ENCODE measurements at regions of chr12 and their contacts with region 1.

Region 1: GRCh38 chr12:27142101-27142721 is 59.8 kb upstream of the C12orf71 start:
- DNase-seq: peak; percentile 65
- ATAC-seq: peak; percentile 93

Region 2: GRCh38 chr12:27024291-27024690 is 117.9 kb before region 1 on chr12:
- intact Hi-C with region 1: loop called in 1 of 2 experiments (anchors 10 kb)
- DNase-seq: no peak
- ATAC-seq: no peak

Region 3: DNA sequence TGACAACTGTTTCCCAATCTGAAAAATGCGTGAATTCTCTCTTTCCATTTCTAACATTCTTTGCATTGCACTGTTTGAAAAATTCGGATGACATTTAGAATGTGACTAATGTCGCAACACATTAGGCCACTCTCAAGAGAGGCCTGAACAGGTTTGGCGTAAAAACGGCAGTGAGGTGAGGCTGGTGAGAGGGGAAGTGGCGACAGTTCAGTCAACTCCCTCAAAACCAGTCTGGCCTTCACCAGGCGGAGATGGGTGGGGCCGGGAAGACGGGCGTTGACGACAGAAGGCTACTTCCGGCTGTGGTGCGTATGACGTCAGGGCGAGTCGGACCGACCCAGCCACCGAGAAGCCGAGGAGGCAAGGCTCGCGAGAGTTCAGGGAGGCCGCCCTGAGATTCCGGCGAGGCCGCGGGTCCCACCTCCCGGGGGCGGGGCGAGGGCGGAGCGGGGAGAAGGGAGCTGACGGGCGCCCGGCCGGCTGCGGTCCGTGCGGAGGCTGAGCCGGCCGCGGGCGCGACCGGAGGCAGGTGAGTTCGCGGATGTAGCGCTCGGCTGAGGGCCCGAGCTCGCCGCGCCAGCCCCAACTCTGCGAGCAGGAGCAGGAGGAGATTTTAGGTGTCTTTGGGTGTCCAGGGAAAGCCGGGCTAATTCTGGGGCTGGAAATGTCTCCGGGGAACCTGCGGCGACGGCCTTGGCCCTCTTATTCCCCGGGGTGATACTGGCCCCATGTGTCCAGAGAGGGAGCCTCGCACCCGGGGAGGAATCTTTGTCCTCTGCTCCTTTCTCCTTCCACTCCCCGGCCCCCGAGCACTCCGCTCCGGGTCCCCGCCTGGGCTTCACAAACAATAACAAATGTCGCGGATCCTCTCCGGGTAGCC is 101.8 kb after region 1 on chr12 and contains the start of gene STK38L:
- intact Hi-C with region 1: loop called in 1 of 2 experiments (anchors 10 kb)
- DNase-seq: peak; percentile 98
- ATAC-seq: peak; percentile 99
- total RNA-seq, gene STK38L: 70.6 to 135 TPM

Region 4: DNA sequence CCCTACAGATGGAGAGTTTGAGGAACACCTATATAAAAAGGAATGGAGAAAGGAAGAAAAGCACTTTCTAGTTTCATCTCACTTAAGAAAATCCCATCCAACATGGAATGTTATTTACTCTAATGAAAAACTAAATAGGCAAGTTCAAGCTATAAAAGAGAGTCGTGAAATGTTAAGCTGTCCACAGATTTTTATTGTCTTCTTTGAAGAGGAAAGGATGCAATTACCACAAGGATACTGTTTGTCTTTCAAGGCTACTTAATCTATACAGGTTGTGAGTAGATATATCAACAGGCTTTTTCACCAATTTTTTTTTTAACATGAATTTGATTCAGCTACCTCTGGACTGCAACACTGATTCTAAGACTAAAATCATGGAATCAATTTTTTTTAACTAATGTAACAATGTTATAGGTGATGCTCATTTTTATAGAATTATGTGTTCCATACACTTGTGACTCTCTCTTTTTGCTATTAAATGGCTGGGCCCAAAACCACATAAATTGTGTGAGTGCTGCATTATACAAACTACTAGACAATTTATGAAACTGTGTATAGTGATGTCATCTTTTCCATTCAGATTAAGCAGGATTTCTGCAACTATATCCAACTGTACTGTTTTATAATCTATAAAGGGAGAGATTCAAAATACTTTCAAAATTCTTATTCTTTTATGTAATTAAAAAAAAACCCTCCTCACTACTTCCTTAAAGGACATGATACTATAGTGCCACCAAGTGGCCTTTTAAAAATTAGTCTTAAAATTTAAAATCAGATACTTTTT is 163.7 kb after region 1 on chr12:
- intact Hi-C with region 1: loop called in 1 of 2 experiments (anchors 5 kb)
- DNase-seq: no peak
- ATAC-seq: peak; percentile 25 to 34

Region 5: DNA sequence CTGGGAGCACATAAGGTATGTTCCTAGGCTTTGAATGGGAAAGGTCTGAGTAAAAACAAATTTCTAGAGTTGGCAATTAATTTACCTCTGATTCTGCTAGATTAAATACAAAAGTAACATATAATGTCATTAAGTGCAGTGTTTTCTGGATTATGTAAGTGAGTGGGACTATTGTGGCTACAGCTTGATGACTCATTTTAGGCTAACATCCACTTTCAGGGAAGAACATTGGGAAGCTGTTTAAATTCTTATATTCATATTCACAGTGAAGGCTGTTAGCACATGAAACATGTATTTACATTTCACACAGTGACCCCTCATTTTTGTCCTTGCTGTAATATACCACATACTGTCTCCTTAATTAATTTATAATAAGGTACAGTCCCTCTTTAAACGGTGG is 177.2 kb after region 1 on chr12:
- intact Hi-C with region 1: no loop called
- DNase-seq: no peak
- ATAC-seq: peak in 1 of 2 donors; percentile 36

Measured in left cardiac atrium (tissue), 4 donors.